Activated CD8-positive, alpha-beta memory T cell treated with anti-CD3 and anti-CD28 coated beads, Interleukin-2, amount 10 ng/mL, durations not matched to agents 7 days and 5 days (primary cell): ENCODE measurements at regions of chr1 and their contacts with region 1.

Region 1: GRCh38 chr1:167533851-167534300 is 15.5 kb upstream of the CD247 start:
- DNase-seq: peak; percentile 73
- ATAC-seq: peak; percentile 86
- H3K4me3 Mint-ChIP-seq: no peak overlapping the region
- H3K27ac Mint-ChIP-seq: no peak overlapping the region
- H3K4me1 Mint-ChIP-seq: peaks cover 4% of the 10 kb centered on the region
- H3K27me3 Mint-ChIP-seq: peaks cover 7% of the 10 kb centered on the region

Region 2: GRCh38 chr1:167066333-167067122 is 467.3 kb before region 1 on chr1:
- CTCF ChIA-PET with region 1: interaction called, 14 read pairs
- DNase-seq: peak; percentile 82
- ATAC-seq: peak; percentile 94
- H3K4me3 Mint-ChIP-seq: no peak overlapping the region
- H3K27ac Mint-ChIP-seq: no peak overlapping the region
- H3K4me1 Mint-ChIP-seq: peaks cover 4% of the 10 kb centered on the region
- H3K27me3 Mint-ChIP-seq: no peaks in the 10 kb centered on the region

Region 3: DNA sequence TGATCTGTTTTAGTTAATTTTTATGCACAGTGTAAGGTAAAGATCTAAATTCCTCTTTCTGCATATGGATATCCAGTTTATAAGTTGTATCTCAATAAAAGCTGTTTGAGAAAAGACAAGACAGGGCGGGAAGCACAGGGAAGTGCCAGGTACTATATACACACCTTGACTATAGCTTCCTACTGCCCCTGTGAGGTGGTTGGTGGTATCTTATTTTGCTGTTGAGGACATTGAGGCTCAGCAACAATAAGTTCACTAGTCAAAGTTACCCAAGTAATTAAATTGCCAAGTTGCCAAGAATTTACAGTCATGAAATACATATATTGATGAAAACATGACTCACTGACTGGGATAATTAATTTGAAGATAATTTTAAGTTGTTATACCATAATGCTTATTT is 124.7 kb before region 1 on chr1:
- CTCF ChIA-PET with region 1: interaction called, 35 read pairs
- DNase-seq: no peak
- ATAC-seq: no peak
- H3K4me3 Mint-ChIP-seq: no peak overlapping the region
- H3K27ac Mint-ChIP-seq: no peak overlapping the region
- H3K4me1 Mint-ChIP-seq: peaks cover 20% of the 10 kb centered on the region
- H3K27me3 Mint-ChIP-seq: no peaks in the 10 kb centered on the region

Region 4: GRCh38 chr1:167447521-167448136 is 86.2 kb before region 1 on chr1:
- CTCF ChIA-PET with region 1: interaction called, 18 read pairs
- DNase-seq: peak; percentile 86
- ATAC-seq: peak; percentile 81
- H3K4me3 Mint-ChIP-seq: peak overlapping the region; percentile 53
- H3K27ac Mint-ChIP-seq: peak overlapping the region; percentile 93
- H3K4me1 Mint-ChIP-seq: peaks cover 86% of the 10 kb centered on the region
- H3K27me3 Mint-ChIP-seq: no peaks in the 10 kb centered on the region

Region 5: DNA sequence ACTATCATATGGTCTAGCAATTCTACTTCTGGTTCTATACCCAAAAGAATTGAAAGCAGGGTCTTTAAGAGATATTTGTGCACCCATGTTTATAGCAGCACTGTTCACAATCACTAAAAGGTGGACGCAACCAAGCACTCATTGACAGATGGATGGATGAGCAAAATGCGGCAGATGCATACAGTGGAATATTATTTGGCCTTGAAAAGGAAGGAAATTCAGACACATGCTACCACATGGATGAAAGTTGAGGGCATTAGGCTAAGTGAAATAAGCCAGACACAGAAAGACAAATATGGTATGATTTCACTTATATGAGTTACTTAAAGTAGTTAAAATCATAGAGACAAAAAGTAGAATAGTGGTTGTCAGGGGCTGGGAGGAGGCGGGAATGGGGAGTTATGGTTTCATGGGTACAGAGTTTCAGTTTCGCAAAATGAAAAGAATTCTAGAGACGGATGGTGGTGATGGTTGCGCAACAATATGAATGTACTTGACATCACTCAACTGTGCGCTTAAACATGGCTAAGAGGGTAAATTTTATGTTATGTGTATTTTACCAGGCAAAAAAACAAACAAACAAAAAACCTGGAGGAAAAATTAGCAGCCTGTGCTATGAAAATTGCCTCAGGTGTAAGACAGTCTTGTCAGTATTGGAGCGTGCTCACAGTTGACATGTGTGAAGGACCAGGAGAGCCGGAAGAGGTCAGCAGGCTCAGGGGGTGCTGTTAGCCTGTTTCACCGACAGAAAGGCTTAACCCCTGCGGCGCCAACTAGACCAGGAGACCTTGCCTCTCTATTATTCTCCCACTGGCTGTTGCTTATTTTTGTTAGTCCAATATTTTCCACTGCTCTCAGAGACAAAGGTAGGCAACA is 42.1 kb before region 1 on chr1:
- CTCF ChIA-PET with region 1: interaction called, 12 read pairs
- DNase-seq: peak; percentile 78
- ATAC-seq: peak; percentile 81
- H3K4me3 Mint-ChIP-seq: peak overlapping the region; percentile 65
- H3K27ac Mint-ChIP-seq: peak overlapping the region; percentile 89
- H3K4me1 Mint-ChIP-seq: peaks cover 92% of the 10 kb centered on the region
- H3K27me3 Mint-ChIP-seq: no peaks in the 10 kb centered on the region

Region 6: GRCh38 chr1:167553136-167554027 is 19.5 kb after region 1 on chr1 and contains the start of gene CREG1:
- CTCF ChIA-PET with region 1: interaction called, 114 read pairs
- DNase-seq: peak; percentile 92
- ATAC-seq: peak; percentile 100
- H3K4me3 Mint-ChIP-seq: peak within 1 kb of the TSS; percentile 77
- H3K27ac Mint-ChIP-seq: peak within 1 kb of the TSS; percentile 62
- H3K4me1 Mint-ChIP-seq: peaks cover 37% of the 10 kb centered on the region
- H3K27me3 Mint-ChIP-seq: peaks cover 4% of the 10 kb centered on the region
- total RNA-seq, gene CREG1: 12.7 to 15.8 TPM

Region 7: GRCh38 chr1:167584581-167584980 is 50.7 kb after region 1 on chr1:
- CTCF ChIA-PET with region 1: no interaction called
- DNase-seq: no peak
- ATAC-seq: no peak
- H3K4me3 Mint-ChIP-seq: no peak overlapping the region
- H3K27ac Mint-ChIP-seq: no peak overlapping the region
- H3K4me1 Mint-ChIP-seq: no peaks in the 10 kb centered on the region
- H3K27me3 Mint-ChIP-seq: peaks cover 2% of the 10 kb centered on the region